Calu3 (cell line): ENCODE measurements at regions of chr4 and their contacts with region 1.

Region 1: GRCh38 chr4:76949276-76950051 is at the start of gene SEPTIN11:
- DNase-seq: peak; percentile 90
- H3K4me3 Mint-ChIP-seq: peak within 1 kb of the TSS; percentile 99
- H3K27ac Mint-ChIP-seq: peak within 1 kb of the TSS; percentile 90
- H3K4me1 Mint-ChIP-seq: no peaks in the 10 kb centered on the region
- H3K27me3 Mint-ChIP-seq: no peaks in the 10 kb centered on the region
- CTCF ChIP-seq: no peak
- total RNA-seq, gene SEPTIN11: 50.2 and 56.2 TPM in 2 replicates

Region 2: GRCh38 chr4:76781698-76782595 is 167.5 kb before region 1 on chr4:
- CTCF ChIA-PET with region 1: no interaction called
- intact Hi-C with region 1: loop called (anchors 10 kb)
- DNase-seq: no peak
- H3K4me3 Mint-ChIP-seq: no peak overlapping the region
- H3K27ac Mint-ChIP-seq: no peak overlapping the region
- H3K4me1 Mint-ChIP-seq: no peaks in the 10 kb centered on the region
- H3K27me3 Mint-ChIP-seq: no peaks in the 10 kb centered on the region
- CTCF ChIP-seq: no peak

Region 3: GRCh38 chr4:76896731-76897535 is 52.5 kb before region 1 on chr4:
- CTCF ChIA-PET with region 1: no interaction called
- intact Hi-C with region 1: loop called (anchors 5 kb)
- DNase-seq: peak; percentile 54
- H3K4me3 Mint-ChIP-seq: peak overlapping the region; percentile 71
- H3K27ac Mint-ChIP-seq: no peak overlapping the region
- H3K4me1 Mint-ChIP-seq: peaks cover 25% of the 10 kb centered on the region
- H3K27me3 Mint-ChIP-seq: peaks cover 12% of the 10 kb centered on the region
- CTCF ChIP-seq: no peak